Activated CD4-positive, alpha-beta memory T cell treated with anti-CD3 and anti-CD28 coated beads for 36 hours (primary cell): ENCODE measurements at regions of chr20 and their contacts with region 1.

Region 1: DNA sequence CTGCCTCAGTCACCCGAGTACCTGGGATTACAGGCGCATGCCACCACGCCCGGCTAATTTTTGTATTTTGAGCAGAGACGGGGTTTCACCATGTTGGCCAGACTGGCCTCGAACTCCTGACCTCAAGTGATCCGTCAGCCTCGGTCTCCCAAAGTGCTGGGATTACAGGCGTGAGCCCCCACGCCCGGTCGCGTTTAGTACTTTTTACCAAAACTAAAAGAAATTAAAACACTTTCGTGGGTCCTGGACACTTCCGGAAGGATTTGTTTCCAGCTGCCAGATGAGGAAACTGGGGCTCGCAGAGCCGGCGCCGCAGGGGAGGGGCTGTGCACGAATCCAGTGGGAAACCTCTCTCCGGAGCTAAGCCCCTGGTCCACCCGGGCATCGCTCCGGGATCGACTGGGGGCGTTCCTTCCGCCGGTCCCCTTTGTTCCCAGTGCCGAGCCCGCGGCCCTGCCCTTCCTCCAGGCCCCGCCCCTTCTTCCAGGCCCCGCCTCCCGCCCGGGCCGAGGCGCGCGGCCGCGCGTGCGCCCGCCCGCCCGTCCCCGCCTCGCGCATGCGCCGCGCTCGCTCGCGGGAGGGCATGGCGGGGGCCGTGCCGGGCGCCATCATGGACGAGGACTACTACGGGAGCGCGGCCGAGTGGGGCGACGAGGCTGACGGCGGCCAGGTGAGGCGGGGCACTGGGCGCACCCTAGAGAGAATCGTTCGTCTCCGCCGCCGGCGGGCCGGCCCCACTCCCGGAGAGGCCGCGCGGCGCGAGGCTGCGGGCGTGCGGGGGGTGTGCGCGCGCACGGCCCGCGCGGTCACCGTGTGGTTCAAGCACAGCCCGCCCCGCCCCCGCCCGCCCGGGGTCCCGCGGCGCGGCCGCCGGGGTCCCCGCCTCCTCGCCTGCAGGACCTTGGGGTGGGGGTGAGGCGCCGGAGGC is at the start of gene NELFCD:
- DNase-seq: peak; percentile 92
- H3K4me3 Mint-ChIP-seq: peak within 1 kb of the TSS; percentile 91
- H3K27ac Mint-ChIP-seq: peak within 1 kb of the TSS; percentile 88
- H3K4me1 Mint-ChIP-seq: peaks cover 34% of the 10 kb centered on the region
- H3K27me3 Mint-ChIP-seq: no peaks in the 10 kb centered on the region
- total RNA-seq, gene NELFCD: 80.5 to 92.3 TPM

Region 2: DNA sequence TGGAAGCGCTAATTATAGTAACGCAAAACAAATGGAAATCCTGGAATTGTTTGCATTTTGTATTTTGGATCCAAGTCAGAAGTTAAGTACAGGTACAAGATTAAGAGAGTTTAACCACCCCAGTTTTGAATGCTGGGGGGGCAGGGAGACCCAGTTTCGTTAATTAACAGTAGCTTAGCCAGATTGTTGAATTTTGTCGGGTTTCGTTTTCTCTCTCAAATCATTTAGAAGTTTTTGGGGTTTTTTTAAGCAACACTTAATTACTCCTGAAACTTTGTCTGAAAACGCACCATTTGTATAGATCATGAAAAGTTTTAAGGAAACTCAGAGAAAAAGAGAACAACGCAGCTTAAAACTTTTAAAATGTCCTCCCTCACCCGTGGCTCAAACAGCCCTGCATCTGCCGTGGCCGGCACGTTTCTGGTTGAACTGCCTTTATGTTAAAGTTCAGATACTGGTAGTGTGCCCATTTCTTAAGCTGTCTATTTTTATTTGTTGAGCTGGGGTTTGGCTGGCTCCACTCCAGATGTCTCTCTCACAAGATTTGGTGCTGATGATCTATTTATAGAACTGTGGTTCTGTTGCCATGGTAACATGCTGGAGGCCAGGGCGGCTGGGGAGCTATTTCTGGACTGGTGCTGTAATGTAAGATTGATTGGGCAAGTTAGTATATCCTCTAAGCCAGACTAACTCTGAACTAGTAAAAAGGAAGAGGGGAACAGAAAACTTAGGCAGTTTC is 73.4 kb before region 1 on chr20:
- CTCF ChIA-PET with region 1: no interaction called
- POLR2A ChIA-PET with region 1: no interaction called
- intact Hi-C with region 1: loop called (anchors 5 kb)
- DNase-seq: peak; percentile 72
- H3K4me3 Mint-ChIP-seq: peak overlapping the region; percentile 55
- H3K27ac Mint-ChIP-seq: peak overlapping the region; percentile 81
- H3K4me1 Mint-ChIP-seq: peaks cover 52% of the 10 kb centered on the region
- H3K27me3 Mint-ChIP-seq: no peaks in the 10 kb centered on the region

Region 3: GRCh38 chr20:59042796-59043660 is 62.1 kb after region 1 on chr20:
- CTCF ChIA-PET with region 1: no interaction called
- POLR2A ChIA-PET with region 1: interaction called, 3 read pairs
- intact Hi-C with region 1: loop called (anchors 2 kb)
- DNase-seq: peak; percentile 96
- H3K4me3 Mint-ChIP-seq: peak overlapping the region; percentile 92
- H3K27ac Mint-ChIP-seq: peak overlapping the region; percentile 88
- H3K4me1 Mint-ChIP-seq: peaks cover 55% of the 10 kb centered on the region
- H3K27me3 Mint-ChIP-seq: no peaks in the 10 kb centered on the region